Left colon (tissue), 2 donors: ENCODE measurements at regions of chr4 and their contacts with region 1.

Region 1: DNA sequence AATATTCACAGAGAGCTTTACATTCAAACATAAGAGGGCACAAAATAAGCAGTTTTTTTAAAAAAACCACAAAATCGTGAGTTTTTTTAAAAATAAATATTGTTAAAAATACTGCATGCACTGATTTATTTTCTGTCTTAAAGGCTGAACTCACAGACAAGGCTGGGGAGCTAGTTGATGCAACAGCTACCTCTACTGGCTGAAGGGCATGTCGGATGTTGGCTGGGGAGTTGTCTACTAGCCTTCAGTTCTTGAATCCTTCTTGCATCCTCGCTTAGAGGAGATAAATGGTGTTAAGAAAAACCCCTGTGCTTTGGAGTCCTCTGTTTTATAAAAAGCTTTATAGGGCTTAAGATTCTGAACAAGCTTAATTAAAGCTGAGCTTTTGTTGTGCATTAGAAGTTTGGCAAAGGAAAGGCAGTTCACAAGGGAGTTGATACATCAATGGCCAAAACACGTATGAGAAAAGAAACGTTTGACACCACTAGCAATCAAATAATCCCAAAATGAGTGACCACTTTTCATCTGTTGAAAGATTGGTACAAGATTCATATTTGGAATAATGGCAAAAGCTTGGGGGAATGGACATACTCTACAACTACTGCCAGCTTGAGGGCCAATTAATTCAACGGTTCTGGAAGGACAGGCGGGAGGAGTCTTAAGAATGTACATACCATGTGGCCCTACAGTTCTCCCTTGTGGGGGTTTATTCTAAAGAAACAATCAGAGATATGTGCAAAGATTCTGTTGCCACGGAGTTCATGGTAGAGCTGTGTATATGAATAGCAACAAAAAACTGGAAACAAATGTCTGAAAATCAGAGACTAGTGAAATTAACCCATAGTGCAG is 94.7 kb downstream of the SEL1L3 start:
- DNase-seq: peak in 1 of 2 donors; percentile 29
- ATAC-seq: peak; percentile 83

Region 2: GRCh38 chr4:25439918-25440477 is 328.1 kb before region 1 on chr4:
- intact Hi-C with region 1: loop called in 1 of 2 experiments (anchors 5 kb)
- DNase-seq: peak in 1 of 2 donors; percentile 53
- ATAC-seq: peak; percentile 80

Region 3: DNA sequence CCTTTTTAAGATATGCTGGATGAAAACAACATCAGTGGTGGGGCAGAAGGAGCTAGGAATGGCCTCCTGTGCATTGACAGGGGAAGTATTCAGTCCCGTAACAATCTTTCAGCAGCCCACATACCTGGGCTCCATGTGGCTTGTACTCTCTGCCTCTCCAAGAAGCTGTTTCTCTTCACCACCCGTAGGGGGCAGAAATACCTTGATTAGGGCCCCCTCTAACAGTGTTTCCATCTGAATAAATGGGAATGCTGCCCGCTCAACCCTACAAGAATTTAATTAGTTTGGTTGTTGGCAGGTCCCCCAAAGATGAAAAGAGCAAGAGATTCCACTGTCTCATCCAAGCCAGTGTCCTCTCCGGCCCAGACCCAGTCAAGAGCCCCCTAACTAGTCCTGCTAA is 301.1 kb after region 1 on chr4:
- intact Hi-C with region 1: no loop called
- DNase-seq: no peak
- ATAC-seq: no peak